ENCODE measurements at regions of chr9 and their contacts with region 1.

Region 1: GRCh38 chr9:73104342-73104741 is 47.3 kb upstream of the ANXA1 start:
- DNase-seq: no peak
- H3K4me3 Mint-ChIP-seq: no peak overlapping the region
- H3K27ac Mint-ChIP-seq: no peak overlapping the region
- H3K4me1 Mint-ChIP-seq: no peaks in the 10 kb centered on the region
- H3K27me3 Mint-ChIP-seq: peaks cover 9% of the 10 kb centered on the region

Region 2: DNA sequence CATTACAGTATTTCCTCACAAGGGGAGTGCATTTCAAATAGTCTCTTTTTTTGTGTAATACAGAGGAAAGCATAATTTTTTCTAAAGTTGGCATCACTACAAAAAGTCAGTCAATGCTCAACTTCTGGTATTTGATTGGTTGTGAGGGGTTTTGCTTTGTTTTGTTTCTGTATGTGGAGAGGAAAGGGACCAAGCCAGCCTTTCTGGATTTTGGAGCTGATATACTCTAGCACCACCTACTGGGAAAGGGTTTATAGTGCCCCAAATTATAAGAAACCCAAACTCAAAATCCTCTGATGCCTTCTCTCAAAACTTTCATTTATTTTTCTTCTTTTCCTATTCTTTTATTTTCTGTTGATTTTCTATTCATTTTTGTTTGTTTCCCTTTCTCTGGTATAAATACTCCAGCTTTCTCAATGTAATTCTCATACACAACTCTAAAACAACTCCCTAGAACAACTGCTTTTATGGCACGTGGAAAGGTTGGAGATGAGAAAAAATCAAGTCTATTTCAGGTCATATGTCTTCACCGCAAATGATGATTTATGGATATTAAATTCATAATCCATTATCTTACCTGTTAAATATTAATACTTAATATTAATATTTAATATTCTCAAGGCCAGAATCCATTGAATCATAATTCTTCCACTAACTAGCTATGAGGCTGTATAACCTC is 22.2 kb before region 1 on chr9:
- CTCF ChIA-PET with region 1: no interaction called
- POLR2A ChIA-PET with region 1: no interaction called
- DNase-seq: no peak
- H3K4me3 Mint-ChIP-seq: no peak overlapping the region
- H3K27ac Mint-ChIP-seq: no peak overlapping the region
- H3K4me1 Mint-ChIP-seq: no peaks in the 10 kb centered on the region
- H3K27me3 Mint-ChIP-seq: peaks cover 26% of the 10 kb centered on the region

Region 3: DNA sequence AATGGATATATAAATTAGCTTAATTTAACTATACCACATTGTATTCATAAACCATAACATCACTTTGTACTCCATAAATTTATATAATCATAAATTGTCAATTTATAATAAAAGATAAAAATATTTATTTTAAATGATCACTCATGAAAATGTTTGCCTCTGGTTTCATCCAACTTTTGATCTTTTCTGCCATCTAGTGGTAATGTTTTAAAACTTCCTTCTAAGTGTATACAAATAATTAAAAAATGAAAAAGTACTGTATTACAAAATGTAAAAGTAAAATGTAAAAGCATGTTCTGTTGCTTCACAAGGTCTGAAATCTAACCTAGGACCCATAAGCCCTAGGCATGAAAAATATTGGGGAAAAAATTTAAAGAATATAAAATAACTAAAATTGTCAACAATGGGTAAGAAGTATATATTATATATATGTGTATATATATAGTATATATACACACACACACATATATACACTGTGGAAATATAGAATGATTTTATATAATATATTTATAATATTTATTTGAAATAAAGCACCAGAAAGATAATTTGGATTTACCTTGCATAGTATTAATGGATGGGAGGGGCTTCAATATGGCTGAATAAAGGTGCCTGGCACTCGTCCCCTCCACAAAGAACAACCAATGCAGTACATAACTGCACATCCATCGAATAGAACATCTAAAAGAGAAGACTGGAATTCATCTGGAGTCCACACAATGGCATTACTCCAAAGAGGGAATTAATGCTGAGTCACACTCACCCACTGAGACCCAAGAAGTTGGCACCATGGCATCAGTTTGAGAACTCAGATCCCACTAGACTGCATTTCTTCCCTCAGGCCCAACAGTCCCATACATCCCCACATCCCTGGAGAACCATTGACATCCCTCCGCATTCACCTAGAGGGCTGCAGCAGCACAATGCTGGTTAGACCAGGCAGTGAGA is 79.8 kb after region 1 on chr9:
- CTCF ChIA-PET with region 1: interaction called, 15 read pairs
- POLR2A ChIA-PET with region 1: interaction called, 6 read pairs
- DNase-seq: no peak
- H3K4me3 Mint-ChIP-seq: no peak overlapping the region
- H3K27ac Mint-ChIP-seq: no peak overlapping the region
- H3K4me1 Mint-ChIP-seq: no peaks in the 10 kb centered on the region
- H3K27me3 Mint-ChIP-seq: peaks cover 24% of the 10 kb centered on the region